Activated CD8-positive, alpha-beta memory T cell treated with anti-CD3 and anti-CD28 coated beads, Interleukin-2, amount 10 ng/mL, durations not matched to agents 7 days and 5 days (primary cell): ENCODE measurements at regions of chr3 and their contacts with region 1.

Region 1: DNA sequence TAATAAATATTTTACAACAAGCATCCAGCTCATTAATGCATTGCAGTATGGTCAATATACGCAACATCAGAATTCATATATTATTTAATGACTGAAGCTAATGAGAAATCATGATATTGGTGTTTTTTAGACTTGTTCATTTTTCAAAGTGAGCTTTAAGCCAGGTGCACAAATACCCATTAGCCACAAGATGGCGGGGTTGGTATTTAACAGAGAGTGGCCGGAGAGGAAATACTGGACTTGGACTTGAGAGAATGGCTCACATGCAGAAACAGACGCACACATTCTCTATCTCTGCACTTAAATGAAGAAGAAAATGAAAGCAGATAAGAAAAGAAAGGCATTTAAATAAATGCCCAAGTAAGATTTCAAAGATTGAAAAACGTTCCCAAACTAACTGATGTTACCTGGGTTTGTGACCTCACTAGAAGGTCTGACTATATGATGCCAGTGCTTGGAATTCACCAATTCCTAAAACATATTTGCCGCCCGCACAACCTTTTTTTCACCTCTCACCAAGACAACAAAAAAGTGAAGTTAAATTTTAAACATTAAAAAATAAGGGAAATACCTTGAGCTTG is 21.2 kb upstream of the CRBN start:
- DNase-seq: no peak
- ATAC-seq: no peak
- H3K4me3 Mint-ChIP-seq: no peak overlapping the region
- H3K27ac Mint-ChIP-seq: no peak overlapping the region
- H3K4me1 Mint-ChIP-seq: peaks cover 17% of the 10 kb centered on the region
- H3K27me3 Mint-ChIP-seq: no peaks in the 10 kb centered on the region

Region 2: DNA sequence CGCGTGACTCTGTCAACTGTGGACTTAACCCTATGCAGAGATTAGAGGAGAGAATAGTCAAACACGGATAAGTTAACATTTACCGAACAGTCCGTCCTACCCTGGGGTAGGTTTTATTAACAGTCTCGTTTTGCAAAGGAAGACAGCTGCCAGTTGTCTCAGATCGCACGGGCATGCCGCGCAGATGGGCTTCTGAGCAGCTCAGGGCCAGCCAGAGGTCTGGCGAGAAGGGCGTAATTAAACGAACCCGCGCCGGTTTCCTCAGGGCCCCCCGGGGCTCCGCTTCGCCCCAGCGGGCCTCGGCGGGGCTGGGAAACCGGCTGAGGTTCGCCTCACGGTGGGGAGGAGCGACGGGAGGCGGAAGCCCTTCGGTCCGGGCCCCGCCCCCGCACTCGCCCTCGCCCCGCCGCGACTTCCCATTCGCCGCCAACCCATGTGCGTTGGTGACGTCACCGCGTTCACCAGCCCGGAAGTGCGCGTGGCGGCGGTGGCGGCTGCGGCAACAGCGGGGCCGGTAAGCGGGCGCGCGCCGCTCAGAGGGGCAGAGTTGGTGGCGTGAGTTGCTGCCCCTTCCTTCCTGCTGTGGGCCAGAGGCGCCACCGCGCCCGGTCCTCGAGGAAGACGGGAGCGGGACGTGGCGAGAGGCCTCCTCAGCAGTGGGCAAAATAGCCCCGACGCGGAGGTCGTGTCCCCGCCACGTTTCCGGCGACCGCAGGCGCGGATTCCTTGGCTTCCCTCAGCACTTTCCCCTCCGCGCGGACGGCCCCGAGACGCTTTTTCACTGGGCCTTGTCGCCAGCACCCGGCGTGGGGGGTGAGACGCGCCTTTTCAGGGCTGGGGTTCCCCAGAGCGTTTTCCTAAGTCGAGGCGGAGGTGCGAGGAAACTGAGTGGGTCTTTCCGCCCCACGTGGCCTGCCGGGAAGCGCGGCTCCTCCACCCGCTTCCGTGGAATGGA is 74.0 kb before region 1 on chr3 and contains the start of gene TRNT1:
- CTCF ChIA-PET with region 1: no interaction called
- DNase-seq: peak; percentile 95
- ATAC-seq: peak; percentile 95
- H3K4me3 Mint-ChIP-seq: peak within 1 kb of the TSS; percentile 96
- H3K27ac Mint-ChIP-seq: peak within 1 kb of the TSS; percentile 96
- H3K4me1 Mint-ChIP-seq: peaks cover 36% of the 10 kb centered on the region
- H3K27me3 Mint-ChIP-seq: no peaks in the 10 kb centered on the region
- total RNA-seq, gene TRNT1: 35.0 to 39.6 TPM

Region 3: DNA sequence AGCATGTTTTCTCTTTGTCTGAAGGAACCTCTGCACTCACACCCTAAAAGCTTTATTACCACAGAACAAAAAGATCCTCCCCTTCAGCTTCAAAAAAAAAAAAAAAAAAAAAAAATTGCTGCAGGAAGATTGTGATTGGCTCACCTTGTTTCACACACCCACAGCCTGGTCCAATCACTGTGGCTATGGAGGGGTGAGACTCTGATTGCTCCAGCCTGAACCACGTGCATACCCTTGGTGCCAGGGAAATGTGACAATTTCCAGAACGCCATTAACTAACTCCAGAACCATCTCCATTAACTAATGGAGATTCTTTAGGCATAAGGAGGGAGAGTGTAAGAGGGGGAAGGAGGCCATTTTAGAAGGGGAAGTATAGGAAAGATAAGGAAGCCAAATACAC is 85.3 kb after region 1 on chr3:
- CTCF ChIA-PET with region 1: no interaction called
- DNase-seq: no peak
- ATAC-seq: no peak
- H3K4me3 Mint-ChIP-seq: no peak overlapping the region
- H3K27ac Mint-ChIP-seq: no peak overlapping the region
- H3K4me1 Mint-ChIP-seq: no peaks in the 10 kb centered on the region
- H3K27me3 Mint-ChIP-seq: peaks cover 6% of the 10 kb centered on the region

Region 4: GRCh38 chr3:3998140-3998922 is 797.6 kb after region 1 on chr3:
- CTCF ChIA-PET with region 1: interaction called, 26 read pairs
- DNase-seq: peak; percentile 43
- ATAC-seq: no peak
- H3K4me3 Mint-ChIP-seq: no peak overlapping the region
- H3K27ac Mint-ChIP-seq: no peak overlapping the region
- H3K4me1 Mint-ChIP-seq: no peaks in the 10 kb centered on the region
- H3K27me3 Mint-ChIP-seq: no peaks in the 10 kb centered on the region

Region 5: GRCh38 chr3:4271834-4272233 is 1071.1 kb after region 1 on chr3:
- CTCF ChIA-PET with region 1: interaction called, 11 read pairs
- DNase-seq: no peak
- ATAC-seq: no peak
- H3K4me3 Mint-ChIP-seq: no peak overlapping the region
- H3K27ac Mint-ChIP-seq: no peak overlapping the region
- H3K4me1 Mint-ChIP-seq: peaks cover 11% of the 10 kb centered on the region
- H3K27me3 Mint-ChIP-seq: no peaks in the 10 kb centered on the region